Activated T-helper 2 cell treated with anti-CD3 and anti-CD28 coated beads, Interferon-gamma antibody, Interleukin-2, Interleukin-4, amounts not matched to agents 10 μg/mL and 5 μg/mL and 100 μg/mL, durations not matched to agents 14 hours and 24 hours and 36 hours (primary cell): ENCODE measurements at regions of chr1 and their contacts with region 1.

Region 1: GRCh38 chr1:228131766-228132165 is 8.3 kb upstream of the GUK1 start:
- DNase-seq: no peak
- H3K4me3 Mint-ChIP-seq: no peak overlapping the region
- H3K27ac Mint-ChIP-seq: no peak overlapping the region
- H3K4me1 Mint-ChIP-seq: peaks cover 4% of the 10 kb centered on the region
- H3K27me3 Mint-ChIP-seq: peaks cover 34% of the 10 kb centered on the region

Region 2: DNA sequence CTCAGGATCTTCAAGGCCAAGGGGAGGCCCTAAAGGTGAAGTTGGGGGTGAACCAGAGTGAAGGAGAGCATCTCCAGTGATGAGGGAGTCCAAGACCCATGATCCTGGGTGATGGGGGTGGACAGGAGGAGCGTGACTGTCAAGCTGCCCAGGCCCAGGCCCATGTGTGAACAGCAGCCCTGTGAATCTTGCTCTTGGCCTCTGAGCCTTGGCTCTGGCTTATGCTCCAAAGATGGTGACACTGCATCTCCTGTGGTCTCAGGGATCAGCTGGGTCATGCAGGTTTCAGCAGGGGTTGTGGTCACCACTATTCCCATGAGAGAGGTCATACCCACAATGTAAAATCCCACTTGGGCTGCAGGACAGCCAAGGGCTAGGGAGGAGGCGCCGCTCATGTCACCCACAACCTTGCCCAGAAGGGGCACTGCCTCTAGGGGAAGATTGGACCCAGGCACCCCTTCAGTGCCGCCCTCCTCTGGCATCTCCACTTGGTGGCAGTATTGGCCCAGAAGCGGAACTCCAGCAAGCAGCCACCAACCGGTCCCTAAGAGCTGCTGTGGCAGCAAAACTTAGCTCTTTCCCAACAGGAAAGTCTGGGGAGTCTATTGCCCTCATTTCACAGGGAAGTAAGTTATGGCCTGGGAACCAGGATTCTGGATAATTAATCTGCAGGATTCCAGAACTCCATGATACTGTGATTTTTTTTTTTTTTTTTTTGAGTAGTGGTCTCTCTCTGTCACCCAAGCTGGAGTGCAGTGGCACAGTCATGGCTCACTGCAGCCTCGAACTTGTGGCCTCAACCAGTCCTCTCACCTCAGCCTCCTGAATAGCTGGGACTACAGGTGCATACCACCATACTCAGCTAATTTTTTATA is 132.5 kb before region 1 on chr1:
- intact Hi-C with region 1: loop called (anchors 2 kb)
- DNase-seq: peak; percentile 45
- H3K4me3 Mint-ChIP-seq: no peak overlapping the region
- H3K27ac Mint-ChIP-seq: no peak overlapping the region
- H3K4me1 Mint-ChIP-seq: no peaks in the 10 kb centered on the region
- H3K27me3 Mint-ChIP-seq: peaks cover 21% of the 10 kb centered on the region

Region 3: GRCh38 chr1:228197555-228198147 is 65.9 kb after region 1 on chr1:
- intact Hi-C with region 1: no loop called
- DNase-seq: no peak
- H3K4me3 Mint-ChIP-seq: no peak overlapping the region
- H3K27ac Mint-ChIP-seq: no peak overlapping the region
- H3K4me1 Mint-ChIP-seq: no peaks in the 10 kb centered on the region
- H3K27me3 Mint-ChIP-seq: no peaks in the 10 kb centered on the region

Region 4: GRCh38 chr1:228212966-228213844 is 81.4 kb after region 1 on chr1:
- intact Hi-C with region 1: no loop called
- DNase-seq: peak; percentile 82
- H3K4me3 Mint-ChIP-seq: peak overlapping the region; percentile 89
- H3K27ac Mint-ChIP-seq: peak overlapping the region; percentile 93
- H3K4me1 Mint-ChIP-seq: peaks cover 4% of the 10 kb centered on the region
- H3K27me3 Mint-ChIP-seq: no peaks in the 10 kb centered on the region

Region 5: DNA sequence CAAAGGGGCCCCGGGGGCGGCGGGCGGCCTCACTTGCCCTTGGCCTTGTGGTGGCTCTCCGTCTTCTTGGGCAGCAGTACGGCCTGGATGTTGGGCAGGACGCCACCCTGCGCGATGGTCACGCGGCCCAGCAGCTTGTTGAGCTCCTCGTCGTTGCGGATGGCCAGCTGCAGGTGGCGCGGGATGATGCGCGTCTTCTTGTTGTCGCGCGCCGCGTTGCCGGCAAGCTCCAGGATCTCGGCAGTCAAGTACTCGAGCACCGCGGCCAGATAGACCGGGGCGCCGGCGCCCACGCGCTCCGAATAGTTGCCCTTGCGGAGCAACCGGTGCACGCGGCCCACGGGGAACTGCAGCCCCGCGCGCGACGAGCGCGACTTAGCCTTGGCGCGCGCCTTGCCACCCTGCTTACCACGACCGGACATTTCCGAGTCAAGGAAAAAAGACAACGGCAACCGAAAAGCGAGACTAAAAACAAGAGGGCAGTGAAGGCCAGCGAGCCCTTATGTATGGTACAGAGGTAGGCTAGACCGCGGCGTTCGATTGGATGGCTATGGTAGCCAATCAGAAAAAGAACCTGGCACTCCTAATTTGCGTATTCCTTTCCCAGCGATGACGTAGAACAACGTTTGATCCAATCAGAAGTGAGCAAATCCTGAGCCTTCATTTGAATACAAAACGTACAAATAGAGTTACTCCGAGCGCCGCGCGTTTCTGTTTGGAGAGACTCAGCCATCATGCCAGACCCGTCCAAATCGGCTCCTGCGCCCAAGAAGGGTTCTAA is 325.8 kb after region 1 on chr1:
- intact Hi-C with region 1: no loop called
- DNase-seq: peak; percentile 89
- H3K4me3 Mint-ChIP-seq: peak overlapping the region; percentile 98
- H3K27ac Mint-ChIP-seq: peak overlapping the region; percentile 99
- H3K4me1 Mint-ChIP-seq: peaks cover 42% of the 10 kb centered on the region
- H3K27me3 Mint-ChIP-seq: no peaks in the 10 kb centered on the region